ENCODE measurements at regions of chr18 and their contacts with region 1.

Region 1: GRCh38 chr18:79644006-79644665 is 35.5 kb upstream of the CTDP1 start:
- DNase-seq: no peak
- ATAC-seq: peak; percentile 85

Region 2: DNA sequence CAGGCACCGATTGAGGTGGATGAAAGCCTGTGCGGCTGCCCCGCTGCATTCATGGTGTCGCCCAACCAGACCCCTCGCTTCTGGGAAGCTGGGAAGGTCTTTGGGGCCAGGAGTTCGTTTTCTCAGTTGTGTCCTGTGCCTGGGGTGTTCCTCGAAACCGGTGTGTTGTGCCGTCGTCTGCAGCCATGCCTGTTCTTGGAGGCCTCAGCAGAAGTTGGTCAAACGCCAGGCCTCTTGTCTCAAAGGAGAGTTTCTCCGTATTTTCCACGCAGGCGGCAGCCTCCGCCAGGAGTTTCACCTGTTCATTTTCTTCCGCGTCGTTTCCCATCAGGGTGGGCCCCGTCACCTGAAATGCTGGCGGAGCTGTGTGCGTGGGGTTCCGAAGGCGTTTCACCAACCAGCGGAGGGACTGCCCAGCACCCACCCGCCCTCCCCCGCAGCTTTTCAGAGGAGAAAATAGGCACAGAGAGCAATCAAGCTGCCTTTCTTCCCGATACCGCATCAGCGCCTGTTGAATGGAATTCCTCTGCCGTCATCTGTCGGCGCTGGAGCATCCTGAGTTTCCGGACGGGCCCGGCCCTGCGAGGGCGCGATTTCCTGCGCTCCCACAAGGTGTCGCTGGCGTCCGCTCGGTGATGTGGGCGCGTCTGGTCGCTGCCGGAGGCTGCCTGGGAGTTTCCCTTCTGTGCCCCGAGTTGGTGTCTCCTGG is 265.4 kb before region 1 on chr18:
- intact Hi-C with region 1: loop called (anchors 1 kb)
- DNase-seq: peak; percentile 89
- ATAC-seq: peak; percentile 86